Heart left ventricle (tissue), 16 donors: ENCODE measurements at regions of chr20 and their contacts with region 1.

Region 1: GRCh38 chr20:58650776-58651558 is at the start of gene STX16:
- DNase-seq: peak; percentile 90 to 95 (median 94)
- ATAC-seq: peak; percentile 95 to 98 (median 97)
- H3K4me3 ChIP-seq: peak within 1 kb of the TSS; percentile 78 to 99 (median 97)
- H3K27ac ChIP-seq: peak within 1 kb of the TSS; percentile 87 to 98 (median 96)
- H3K4me1 ChIP-seq: peaks cover 3 to 49% (median 35%) of the 10 kb centered on the region in 12 donors
- H3K27me3 ChIP-seq: no peaks in the 10 kb centered on the region
- CTCF ChIP-seq: peak; percentile 36 to 88 (median 62)
- POLR2A ChIP-seq: peak in 1 of 2 donors; percentile 65
- total RNA-seq, gene STX16: 14.6 to 38.9 (median 25.6) TPM

Region 2: DNA sequence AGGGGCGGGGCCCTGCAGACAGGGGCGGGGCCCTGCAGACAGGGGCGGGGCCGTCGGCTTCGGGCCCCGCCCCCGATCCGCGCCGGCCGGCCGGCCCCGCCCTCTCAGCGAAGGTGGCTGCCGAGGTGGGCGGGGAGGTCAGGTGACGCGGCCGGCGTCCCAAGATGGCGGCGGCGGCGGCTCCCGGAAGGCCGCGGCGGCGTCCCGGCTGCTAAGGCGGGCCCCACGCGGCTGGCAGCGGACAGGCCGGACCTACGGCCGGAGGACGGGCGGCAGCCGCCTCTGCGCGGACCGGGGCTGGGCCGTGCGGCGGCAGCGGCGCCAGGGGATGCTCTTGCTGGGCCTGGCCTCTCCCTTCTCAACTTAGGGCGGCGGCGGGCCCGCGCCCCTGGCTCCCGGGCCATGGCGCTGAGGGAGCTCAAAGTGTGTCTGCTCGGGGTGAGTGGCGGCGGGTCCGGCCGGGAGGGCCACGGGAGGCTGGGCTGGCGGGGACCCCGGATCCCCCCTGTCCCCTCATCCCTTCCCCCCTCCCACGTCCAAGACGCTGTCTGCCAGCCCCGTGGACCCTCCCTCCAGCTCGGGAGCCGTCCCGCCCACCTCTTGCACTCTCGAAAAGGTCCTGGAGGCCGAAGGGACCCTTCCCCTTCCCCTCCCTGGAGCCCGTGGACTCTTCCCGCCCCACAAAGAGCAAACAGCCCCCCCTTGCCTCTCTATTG is 341.2 kb before region 1 on chr20 and contains the start of gene RAB22A:
- intact Hi-C with region 1: loop called in 1 of 10 experiments (anchors 10 kb)
- DNase-seq: peak; percentile 80 to 92 (median 88)
- ATAC-seq: peak; percentile 83 to 96 (median 93)
- H3K4me3 ChIP-seq: peak within 1 kb of the TSS; percentile 85 to 100 (median 99)
- H3K27ac ChIP-seq: peak within 1 kb of the TSS; percentile 79 to 93 (median 88)
- H3K4me1 ChIP-seq: peaks cover 0 to 52% (median 16%) of the 10 kb centered on the region in 12 donors
- H3K27me3 ChIP-seq: no peaks in the 10 kb centered on the region
- CTCF ChIP-seq: no peak
- POLR2A ChIP-seq: peak in 1 of 2 donors; percentile 85
- total RNA-seq, gene RAB22A: 5.4 to 9.7 (median 7.6) TPM

Region 3: GRCh38 chr20:58471193-58472164 is 179.5 kb before region 1 on chr20:
- intact Hi-C with region 1: loop called in 1 of 10 experiments (anchors 10 kb)
- DNase-seq: peak; percentile 67 to 82 (median 76)
- ATAC-seq: peak; percentile 82 to 94 (median 90)
- H3K4me3 ChIP-seq: no peak overlapping the region
- H3K27ac ChIP-seq: peak overlapping the region in 3 of 12 donors; percentile 24 to 53 (median 46)
- H3K4me1 ChIP-seq: peaks cover 0 to 10% (median 0%) of the 10 kb centered on the region in 12 donors
- H3K27me3 ChIP-seq: no peaks in the 10 kb centered on the region
- CTCF ChIP-seq: no peak
- POLR2A ChIP-seq: no peak

Region 4: DNA sequence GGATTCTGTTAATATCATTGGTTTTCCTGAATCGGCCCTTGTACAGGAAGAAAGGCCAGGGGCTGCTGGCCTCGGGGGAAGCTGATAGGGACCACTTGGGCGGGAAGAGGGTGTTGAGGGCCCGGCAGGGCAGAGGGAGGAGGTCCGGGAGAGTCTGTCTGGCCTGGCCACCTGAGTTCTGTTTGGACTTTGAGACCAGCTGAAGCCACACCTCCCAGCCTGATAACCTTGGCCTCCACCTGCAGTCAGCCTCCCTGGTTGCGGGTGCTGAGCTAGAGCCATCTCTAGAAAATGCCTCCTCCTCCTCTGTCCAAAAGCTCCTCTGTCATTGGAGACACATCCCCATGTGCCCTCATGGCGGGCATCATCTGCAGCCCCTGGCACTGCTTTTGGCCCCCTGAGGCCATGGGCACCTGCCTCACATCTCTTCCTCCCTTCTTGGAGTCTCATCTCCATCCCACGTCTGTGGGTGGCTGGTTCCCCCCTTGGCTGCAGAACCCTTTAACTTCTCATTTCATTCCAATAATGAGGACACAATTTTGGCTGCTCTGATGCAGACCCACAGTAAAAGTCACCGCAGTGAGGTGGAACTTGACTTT is 152.4 kb before region 1 on chr20:
- intact Hi-C with region 1: no loop called
- DNase-seq: no peak
- ATAC-seq: no peak
- H3K4me3 ChIP-seq: no peak overlapping the region
- H3K27ac ChIP-seq: no peak overlapping the region
- H3K4me1 ChIP-seq: no peaks in the 10 kb centered on the region
- H3K27me3 ChIP-seq: no peaks in the 10 kb centered on the region
- CTCF ChIP-seq: no peak
- POLR2A ChIP-seq: no peak

Region 5: GRCh38 chr20:58839474-58839874 is 188.5 kb after region 1 on chr20:
- intact Hi-C with region 1: loop called in 2 of 10 experiments (anchors 5 to 10 kb)
- DNase-seq: no peak
- ATAC-seq: peak in 3 of 4 donors; percentile 59 to 79 (median 66)
- H3K4me3 ChIP-seq: peak overlapping the region in 7 of 12 donors; percentile 6 to 40 (median 17)
- H3K27ac ChIP-seq: no peak overlapping the region
- H3K4me1 ChIP-seq: peaks cover 0 to 16% (median 0%) of the 10 kb centered on the region in 12 donors
- H3K27me3 ChIP-seq: peaks cover 3 to 69% (median 28%) of the 10 kb centered on the region in 9 donors
- CTCF ChIP-seq: peak; percentile 13 to 58 (median 37)
- POLR2A ChIP-seq: no peak

Region 6: DNA sequence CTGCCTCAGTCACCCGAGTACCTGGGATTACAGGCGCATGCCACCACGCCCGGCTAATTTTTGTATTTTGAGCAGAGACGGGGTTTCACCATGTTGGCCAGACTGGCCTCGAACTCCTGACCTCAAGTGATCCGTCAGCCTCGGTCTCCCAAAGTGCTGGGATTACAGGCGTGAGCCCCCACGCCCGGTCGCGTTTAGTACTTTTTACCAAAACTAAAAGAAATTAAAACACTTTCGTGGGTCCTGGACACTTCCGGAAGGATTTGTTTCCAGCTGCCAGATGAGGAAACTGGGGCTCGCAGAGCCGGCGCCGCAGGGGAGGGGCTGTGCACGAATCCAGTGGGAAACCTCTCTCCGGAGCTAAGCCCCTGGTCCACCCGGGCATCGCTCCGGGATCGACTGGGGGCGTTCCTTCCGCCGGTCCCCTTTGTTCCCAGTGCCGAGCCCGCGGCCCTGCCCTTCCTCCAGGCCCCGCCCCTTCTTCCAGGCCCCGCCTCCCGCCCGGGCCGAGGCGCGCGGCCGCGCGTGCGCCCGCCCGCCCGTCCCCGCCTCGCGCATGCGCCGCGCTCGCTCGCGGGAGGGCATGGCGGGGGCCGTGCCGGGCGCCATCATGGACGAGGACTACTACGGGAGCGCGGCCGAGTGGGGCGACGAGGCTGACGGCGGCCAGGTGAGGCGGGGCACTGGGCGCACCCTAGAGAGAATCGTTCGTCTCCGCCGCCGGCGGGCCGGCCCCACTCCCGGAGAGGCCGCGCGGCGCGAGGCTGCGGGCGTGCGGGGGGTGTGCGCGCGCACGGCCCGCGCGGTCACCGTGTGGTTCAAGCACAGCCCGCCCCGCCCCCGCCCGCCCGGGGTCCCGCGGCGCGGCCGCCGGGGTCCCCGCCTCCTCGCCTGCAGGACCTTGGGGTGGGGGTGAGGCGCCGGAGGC is 330.0 kb after region 1 on chr20 and contains the start of gene NELFCD:
- intact Hi-C with region 1: loop called in 1 of 10 experiments (anchors 5 kb)
- DNase-seq: peak; percentile 89 to 95 (median 91)
- ATAC-seq: peak; percentile 83 to 96 (median 94)
- H3K4me3 ChIP-seq: peak within 1 kb of the TSS; percentile 64 to 96 (median 78)
- H3K27ac ChIP-seq: peak within 1 kb of the TSS; percentile 53 to 93 (median 84)
- H3K4me1 ChIP-seq: peaks cover 0 to 44% (median 29%) of the 10 kb centered on the region in 12 donors
- H3K27me3 ChIP-seq: no peaks in the 10 kb centered on the region
- CTCF ChIP-seq: no peak
- POLR2A ChIP-seq: peak in 1 of 2 donors; percentile 88
- total RNA-seq, gene NELFCD: 21.7 to 43.8 (median 27.7) TPM